Posterior vena cava (tissue), 2 donors: ENCODE measurements at regions of chr20 and their contacts with region 1.

Region 1: DNA sequence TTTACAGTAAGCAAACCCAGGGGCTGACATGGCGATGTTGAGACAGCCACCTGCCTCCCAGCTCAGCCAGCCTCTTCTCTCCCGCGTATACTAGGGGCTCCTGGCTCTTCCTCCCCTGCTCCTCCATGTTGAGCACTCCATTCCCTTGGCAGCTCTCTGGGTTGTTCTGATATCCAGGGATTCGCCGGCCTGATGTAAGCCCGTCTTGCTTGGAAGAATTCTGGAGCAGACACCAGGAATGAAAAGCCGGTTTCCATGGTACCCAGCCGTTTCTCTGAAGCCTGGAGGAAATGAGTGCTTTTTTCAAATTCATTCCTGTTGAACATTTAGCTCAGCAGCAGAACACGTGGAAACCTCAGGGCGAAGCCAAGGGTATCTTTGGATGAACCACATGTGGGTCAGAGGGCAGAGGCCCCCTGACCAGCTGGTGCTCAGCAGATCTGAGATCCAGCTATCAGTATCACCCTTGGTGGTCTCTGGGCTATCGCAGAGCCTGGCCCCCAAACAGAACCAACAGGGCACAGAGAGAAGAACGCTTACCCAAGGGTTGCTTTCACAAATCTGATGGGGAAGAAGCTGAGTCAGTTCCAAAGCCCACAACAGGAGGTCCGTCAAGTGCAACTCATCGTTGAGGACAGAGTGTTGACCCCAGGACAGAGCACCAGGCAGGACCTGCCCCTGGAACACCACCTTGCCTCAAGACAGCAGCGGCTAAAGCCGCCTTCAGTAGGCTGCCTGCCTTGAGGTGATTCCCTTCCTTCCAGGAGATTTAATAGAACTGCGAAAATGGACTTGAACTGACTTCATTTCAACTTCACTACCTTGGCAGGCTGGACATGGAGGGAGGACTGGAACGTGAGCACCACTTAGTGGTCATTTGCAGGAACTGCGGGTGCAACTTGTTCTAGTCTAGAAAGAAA is 96.1 kb upstream of the RIN2 start:
- DNase-seq: no peak

Region 2: DNA sequence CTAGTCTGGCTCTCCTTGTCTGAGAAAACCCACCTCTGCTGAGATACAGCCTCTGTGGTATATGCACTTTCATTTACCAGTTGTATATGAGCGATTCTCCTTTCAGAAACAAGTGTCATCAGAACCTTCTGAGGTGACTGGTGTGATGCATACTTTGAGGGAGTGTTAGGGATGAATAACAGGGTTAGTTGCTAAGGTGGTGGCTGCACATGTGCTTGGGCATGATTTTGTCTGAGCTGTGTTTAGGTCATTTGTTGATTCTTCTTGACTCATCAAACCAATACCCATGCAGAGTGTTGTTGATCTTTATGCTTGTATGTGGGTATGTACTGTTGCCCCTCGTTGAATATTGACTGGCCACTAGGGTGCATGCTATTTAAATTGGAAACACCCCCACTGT is 1048.4 kb before region 1 on chr20:
- intact Hi-C with region 1: loop called in 1 of 2 experiments (anchors 10 kb)
- DNase-seq: no peak

Region 3: GRCh38 chr20:18628330-18628920 is 1033.6 kb before region 1 on chr20:
- intact Hi-C with region 1: loop called in 1 of 2 experiments (anchors 10 kb)
- DNase-seq: no peak

Region 4: DNA sequence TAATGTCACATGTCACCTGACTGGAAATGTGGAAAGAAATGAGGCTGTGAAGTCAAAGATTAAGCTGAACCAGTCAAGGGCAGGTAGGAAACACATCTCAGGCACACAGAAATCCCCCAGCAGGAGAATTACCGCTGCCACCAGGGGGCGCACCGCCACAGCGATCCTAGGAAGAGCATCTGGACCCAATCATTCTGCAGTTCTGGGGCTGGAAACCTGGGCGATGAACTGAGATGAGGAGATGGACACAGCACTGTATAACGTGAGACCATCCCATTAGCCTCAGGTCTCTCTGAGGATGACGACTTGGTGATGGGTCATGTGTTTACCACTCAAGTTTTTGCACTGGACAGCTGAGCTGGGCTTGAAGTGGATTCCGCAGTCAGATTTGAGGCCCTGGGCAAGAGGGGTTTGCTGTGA is 456.0 kb before region 1 on chr20:
- intact Hi-C with region 1: loop called in 1 of 2 experiments (anchors 5 kb)
- DNase-seq: peak; percentile 92

Region 5: GRCh38 chr20:19212821-19213502 is 449.0 kb before region 1 on chr20:
- intact Hi-C with region 1: loop called (anchors 2 to 5 kb)
- DNase-seq: peak; percentile 93

Region 6: GRCh38 chr20:19540392-19540791 is 121.6 kb before region 1 on chr20:
- intact Hi-C with region 1: no loop called
- DNase-seq: no peak

Region 7: DNA sequence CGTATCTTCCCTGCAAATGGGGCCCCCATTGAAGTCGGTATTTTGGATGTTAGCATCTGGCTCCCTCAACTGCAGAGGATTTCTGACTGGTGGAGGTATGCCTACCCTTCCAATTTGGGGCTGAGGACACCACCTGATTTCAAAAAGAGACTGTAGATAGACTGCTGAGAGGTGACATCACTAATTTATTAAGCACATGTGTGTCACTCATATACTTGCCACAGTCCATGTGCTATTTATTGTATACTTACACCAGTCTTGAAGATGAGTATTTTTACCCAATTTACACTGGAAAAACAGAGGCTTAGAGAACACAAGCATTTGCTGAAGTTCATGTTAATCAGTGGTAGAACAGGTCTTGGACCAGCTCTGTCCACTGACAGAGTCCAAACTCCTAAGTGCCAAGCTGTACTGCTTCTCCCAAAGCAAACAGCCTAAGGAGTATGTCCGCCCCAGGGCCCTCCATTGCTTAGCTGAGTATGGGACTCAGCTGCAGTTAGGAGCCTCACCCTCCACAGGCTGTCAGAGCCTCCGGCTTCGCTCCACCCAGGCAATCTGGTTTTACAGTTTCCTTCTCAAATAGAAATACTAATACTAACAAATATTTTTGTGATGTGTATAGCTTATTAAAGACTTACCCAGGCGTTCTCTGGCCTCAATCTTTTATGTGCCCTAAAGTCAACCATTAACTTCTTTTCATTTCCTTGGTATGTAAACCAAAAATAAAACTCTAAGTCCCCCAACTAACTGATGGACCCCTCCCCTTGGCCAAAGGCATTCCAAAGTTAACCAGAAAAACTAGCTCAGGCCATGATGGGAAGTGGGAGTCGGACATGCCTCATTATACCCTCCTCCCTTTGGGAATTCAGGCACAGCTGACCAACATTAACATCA is 113.6 kb after region 1 on chr20:
- intact Hi-C with region 1: no loop called
- DNase-seq: no peak

Region 8: GRCh38 chr20:20292472-20292871 is 630.5 kb after region 1 on chr20:
- intact Hi-C with region 1: no loop called
- DNase-seq: no peak